MCF 10A (cell line): ENCODE measurements at regions of chr19 and their contacts with region 1.

Region 1: DNA sequence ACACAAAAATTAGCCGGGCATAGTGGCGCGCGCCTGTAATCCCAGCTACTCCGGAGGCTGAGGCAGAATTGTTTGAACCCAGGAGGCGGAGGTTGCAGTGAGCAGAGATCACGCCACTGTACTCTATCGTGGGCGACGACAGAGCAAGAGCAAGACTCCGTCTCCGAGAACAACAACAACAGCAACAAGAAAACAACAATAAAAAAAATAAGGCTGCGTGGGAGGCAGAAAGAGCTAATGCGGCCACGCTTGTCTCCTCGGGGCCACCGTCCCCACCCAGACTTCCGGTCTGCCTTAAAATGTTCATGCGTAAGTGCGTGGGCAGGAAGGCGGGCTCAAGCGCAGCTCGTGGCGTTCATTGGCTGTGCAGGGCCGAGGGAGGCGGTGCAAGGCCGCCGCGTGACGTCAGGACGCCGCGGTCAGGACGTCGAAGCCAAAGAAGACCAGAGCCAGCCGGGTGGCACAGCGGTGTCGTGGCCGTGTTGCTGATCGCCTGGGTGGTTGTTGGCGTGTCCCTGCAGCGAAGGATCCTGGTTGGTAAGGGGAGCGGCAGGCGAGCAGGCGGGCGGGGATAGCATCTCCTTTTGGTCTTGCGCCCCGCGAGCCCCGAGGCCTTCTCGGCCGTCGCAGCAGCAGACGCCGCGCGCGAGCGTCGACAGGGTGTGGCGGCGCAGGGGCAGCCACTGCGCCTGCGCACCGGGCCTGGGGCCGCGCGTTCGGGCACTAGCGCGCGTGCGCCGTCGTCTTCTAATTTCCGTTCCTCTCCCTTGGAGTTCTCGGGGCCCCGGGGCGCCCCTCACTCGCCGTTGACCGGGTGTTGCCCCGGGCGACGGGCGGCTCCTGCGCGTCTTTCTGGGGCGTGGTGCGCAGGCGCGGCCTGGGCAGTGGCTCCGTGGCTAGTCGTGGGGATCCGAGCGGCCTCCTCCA is at the start of gene LENG8:
- DNase-seq: peak; percentile 97
- H3K4me3 Mint-ChIP-seq: peak within 1 kb of the TSS; percentile 97
- H3K27ac Mint-ChIP-seq: peak within 1 kb of the TSS; percentile 99
- H3K4me1 Mint-ChIP-seq: peaks cover 28% of the 10 kb centered on the region
- H3K27me3 Mint-ChIP-seq: no peaks in the 10 kb centered on the region
- CTCF ChIP-seq: no peak
- total RNA-seq, gene LENG8: 238 and 249 TPM in 2 replicates

Region 2: GRCh38 chr19:54430306-54431254 is 18.5 kb before region 1 on chr19:
- CTCF ChIA-PET with region 1: interaction called, 3 read pairs
- POLR2A ChIA-PET with region 1: interaction called, 29 read pairs
- intact Hi-C with region 1: no loop called
- DNase-seq: peak; percentile 34
- H3K4me3 Mint-ChIP-seq: peak overlapping the region; percentile 48
- H3K27ac Mint-ChIP-seq: no peak overlapping the region
- H3K4me1 Mint-ChIP-seq: peaks cover 14% of the 10 kb centered on the region
- H3K27me3 Mint-ChIP-seq: peaks cover 13% of the 10 kb centered on the region
- CTCF ChIP-seq: no peak

Region 3: GRCh38 chr19:54463531-54464043 is 14.6 kb after region 1 on chr19 and contains the start of gene LENG9:
- CTCF ChIA-PET with region 1: interaction called, 4 read pairs
- POLR2A ChIA-PET with region 1: interaction called, 157 read pairs
- intact Hi-C with region 1: loop called (anchors 1 kb)
- DNase-seq: peak; percentile 100
- H3K4me3 Mint-ChIP-seq: peak within 1 kb of the TSS; percentile 84
- H3K27ac Mint-ChIP-seq: peak within 1 kb of the TSS; percentile 99
- H3K4me1 Mint-ChIP-seq: peaks cover 14% of the 10 kb centered on the region
- H3K27me3 Mint-ChIP-seq: no peaks in the 10 kb centered on the region
- CTCF ChIP-seq: no peak
- total RNA-seq, gene LENG9: 6.9 and 9.3 TPM in 2 replicates

Region 4: GRCh38 chr19:54644056-54644455 is 195.0 kb after region 1 on chr19:
- CTCF ChIA-PET with region 1: no interaction called
- POLR2A ChIA-PET with region 1: no interaction called
- intact Hi-C with region 1: no loop called
- DNase-seq: no peak
- H3K4me3 Mint-ChIP-seq: no peak overlapping the region
- H3K27ac Mint-ChIP-seq: no peak overlapping the region
- H3K4me1 Mint-ChIP-seq: no peaks in the 10 kb centered on the region
- H3K27me3 Mint-ChIP-seq: no peaks in the 10 kb centered on the region
- CTCF ChIP-seq: no peak